Mammary epithelial cell (primary cell): ENCODE measurements at regions of chr1 and their contacts with region 1.

Region 1: GRCh38 chr1:9629445-9630201 is 21.9 kb upstream of the PIK3CD start:
- DNase-seq: no peak
- H3K4me3 ChIP-seq: no peak overlapping the region
- H3K27ac ChIP-seq: no peak overlapping the region
- H3K4me1 ChIP-seq: peaks cover 10% of the 10 kb centered on the region
- H3K27me3 ChIP-seq: no peaks in the 10 kb centered on the region
- CTCF ChIP-seq: no peak

Region 2: DNA sequence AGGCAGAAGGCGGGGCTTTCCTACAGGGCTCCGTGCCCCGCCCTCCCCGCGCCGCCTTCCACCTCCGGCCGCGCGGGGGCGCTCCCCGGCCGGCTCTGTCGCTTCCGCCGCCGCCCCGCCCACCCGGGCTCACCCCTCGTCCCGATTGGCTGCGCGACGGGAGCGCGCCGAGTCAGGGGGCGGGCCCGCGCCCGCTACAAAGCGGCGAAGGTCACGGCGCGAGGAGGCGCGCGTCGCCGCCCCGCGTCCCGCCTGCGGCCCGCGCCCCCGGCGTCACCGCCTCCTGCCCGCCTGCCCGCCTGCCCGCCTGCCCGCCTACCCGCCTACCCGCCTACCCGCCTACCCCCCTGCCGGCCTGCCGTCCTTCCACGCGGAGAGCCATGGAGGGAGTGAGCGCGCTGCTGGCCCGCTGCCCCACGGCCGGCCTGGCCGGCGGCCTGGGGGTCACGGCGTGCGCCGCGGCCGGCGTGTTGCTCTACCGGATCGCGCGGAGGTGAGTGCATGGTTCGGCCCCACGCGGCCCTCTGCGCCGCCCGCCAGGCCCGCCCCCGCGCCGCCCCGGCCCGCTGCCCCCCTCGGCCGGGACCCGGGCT is 41.0 kb before region 1 on chr1 and contains the start of gene TMEM201:
- CTCF ChIA-PET with region 1: no interaction called
- dilution Hi-C with region 1: loop called (anchors 5 kb)
- in situ Hi-C with region 1: no loop called
- intact Hi-C with region 1: no loop called
- DNase-seq: peak; percentile 89
- H3K4me3 ChIP-seq: peak within 1 kb of the TSS; percentile 58 to 72 (median 64)
- H3K27ac ChIP-seq: peak within 1 kb of the TSS; percentile 61
- H3K4me1 ChIP-seq: peaks cover 26% of the 10 kb centered on the region
- H3K27me3 ChIP-seq: no peaks in the 10 kb centered on the region
- CTCF ChIP-seq: peak; percentile 37 to 64
- total RNA-seq, gene TMEM201: 6.8 to 15.9 TPM

Region 3: GRCh38 chr1:9689011-9689706 is 59.5 kb after region 1 on chr1:
- CTCF ChIA-PET with region 1: no interaction called
- dilution Hi-C with region 1: no loop called
- in situ Hi-C with region 1: no loop called
- intact Hi-C with region 1: loop called (anchors 1 kb)
- DNase-seq: peak; percentile 66
- H3K4me3 ChIP-seq: peak overlapping the region; percentile 48 to 62 (median 53)
- H3K27ac ChIP-seq: peak overlapping the region; percentile 18
- H3K4me1 ChIP-seq: peaks cover 39% of the 10 kb centered on the region
- H3K27me3 ChIP-seq: no peaks in the 10 kb centered on the region
- CTCF ChIP-seq: no peak

Region 4: DNA sequence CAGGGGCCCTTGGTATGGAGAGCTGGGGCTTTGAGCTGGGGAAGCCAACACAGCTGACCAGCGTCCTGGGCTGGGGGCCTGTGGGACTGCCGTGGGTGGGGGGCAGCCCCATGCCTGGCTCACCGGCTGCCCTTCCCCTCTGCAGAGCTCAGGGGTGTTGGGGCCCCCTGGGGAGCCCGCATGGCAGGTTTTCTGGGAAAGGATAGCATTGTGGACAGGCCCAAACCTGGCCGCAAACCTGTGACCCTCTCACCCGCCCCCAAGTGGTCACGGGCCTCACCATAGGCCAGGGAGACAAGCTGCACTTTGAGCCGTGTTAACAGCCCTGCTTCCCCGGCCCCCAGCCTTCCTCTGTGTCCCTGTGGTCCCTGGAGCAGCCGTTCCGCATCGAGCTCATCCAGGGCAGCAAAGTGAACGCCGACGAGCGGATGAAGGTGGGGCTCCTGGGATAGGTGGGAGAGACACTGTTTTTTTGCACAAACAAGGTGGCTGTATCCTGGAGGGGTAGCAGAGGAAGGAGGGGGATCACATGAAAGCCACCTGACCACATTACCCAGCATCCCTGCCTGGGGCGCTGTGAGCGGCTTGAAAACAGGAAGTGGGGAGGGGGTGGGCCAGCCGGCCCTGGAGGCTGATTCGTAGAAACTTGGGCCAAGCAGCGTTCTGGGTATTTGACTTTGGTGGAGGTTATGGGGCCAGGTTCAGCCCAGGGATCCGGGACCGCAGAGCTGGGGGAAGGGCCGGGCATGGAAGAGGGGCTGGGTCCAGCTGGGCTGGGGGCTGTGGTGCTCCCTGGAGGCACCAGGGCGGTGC is 87.8 kb after region 1 on chr1:
- CTCF ChIA-PET with region 1: no interaction called
- dilution Hi-C with region 1: no loop called
- in situ Hi-C with region 1: no loop called
- intact Hi-C with region 1: loop called (anchors 1 kb)
- DNase-seq: no peak
- H3K4me3 ChIP-seq: no peak overlapping the region
- H3K27ac ChIP-seq: no peak overlapping the region
- H3K4me1 ChIP-seq: peaks cover 53% of the 10 kb centered on the region
- H3K27me3 ChIP-seq: no peaks in the 10 kb centered on the region
- CTCF ChIP-seq: no peak

Region 5: DNA sequence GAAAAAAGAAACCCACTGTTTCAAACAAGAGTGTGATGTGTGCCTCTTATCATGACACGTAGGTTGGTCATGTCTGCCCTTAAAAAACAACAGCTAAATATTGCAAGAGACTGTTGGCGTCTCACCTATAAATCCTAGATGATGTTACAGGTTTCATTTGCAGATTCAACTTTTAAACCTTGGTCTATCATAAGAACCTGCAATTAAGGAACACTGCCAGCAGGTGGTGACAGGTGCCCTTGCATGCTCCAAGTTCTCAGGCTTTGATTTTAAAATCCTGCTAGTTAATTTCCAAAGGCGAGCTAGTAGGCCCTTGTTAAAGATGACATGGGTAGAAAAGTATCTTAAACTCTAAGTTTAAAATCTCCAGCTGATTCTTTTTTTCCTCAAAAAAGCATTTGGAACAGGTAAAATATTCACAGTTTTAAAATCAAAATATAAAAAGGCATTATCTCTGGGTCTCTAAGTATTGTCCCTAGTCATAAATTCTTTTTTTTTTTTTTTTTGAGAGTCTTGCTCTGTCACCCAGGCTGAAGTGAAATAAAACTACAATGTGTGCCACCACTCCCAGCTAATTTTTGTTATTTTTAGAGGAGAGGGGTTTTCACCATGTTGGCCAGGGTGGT is 155.0 kb after region 1 on chr1:
- CTCF ChIA-PET with region 1: interaction called, 3 read pairs
- dilution Hi-C with region 1: no loop called
- in situ Hi-C with region 1: no loop called
- intact Hi-C with region 1: loop called (anchors 1 kb)
- DNase-seq: peak; percentile 52
- H3K4me3 ChIP-seq: no peak overlapping the region
- H3K27ac ChIP-seq: no peak overlapping the region
- H3K4me1 ChIP-seq: peaks cover 12% of the 10 kb centered on the region
- H3K27me3 ChIP-seq: no peaks in the 10 kb centered on the region
- CTCF ChIP-seq: peak; percentile 79 to 84

Region 6: GRCh38 chr1:9910425-9911178 is 281.0 kb after region 1 on chr1:
- CTCF ChIA-PET with region 1: no interaction called
- dilution Hi-C with region 1: no loop called
- in situ Hi-C with region 1: no loop called
- intact Hi-C with region 1: loop called (anchors 2 kb)
- DNase-seq: peak; percentile 99
- H3K4me3 ChIP-seq: peak overlapping the region; percentile 56 to 61 (median 58)
- H3K27ac ChIP-seq: peak overlapping the region; percentile 67
- H3K4me1 ChIP-seq: peaks cover 15% of the 10 kb centered on the region
- H3K27me3 ChIP-seq: no peaks in the 10 kb centered on the region
- CTCF ChIP-seq: no peak